MCF 10A (cell line): ENCODE measurements at regions of chr12 and their contacts with region 1.

Region 1: GRCh38 chr12:26884765-26885576 is 52.0 kb upstream of the ITPR2 start:
- DNase-seq: peak; percentile 86
- H3K4me3 Mint-ChIP-seq: no peak overlapping the region
- H3K27ac Mint-ChIP-seq: no peak overlapping the region
- H3K4me1 Mint-ChIP-seq: peaks cover 8% of the 10 kb centered on the region
- H3K27me3 Mint-ChIP-seq: no peaks in the 10 kb centered on the region
- CTCF ChIP-seq: peak; percentile 82

Region 2: GRCh38 chr12:26845057-26845666 is 39.8 kb before region 1 on chr12:
- CTCF ChIA-PET with region 1: interaction called, 21 read pairs
- POLR2A ChIA-PET with region 1: no interaction called
- intact Hi-C with region 1: no loop called
- DNase-seq: peak; percentile 66
- H3K4me3 Mint-ChIP-seq: no peak overlapping the region
- H3K27ac Mint-ChIP-seq: no peak overlapping the region
- H3K4me1 Mint-ChIP-seq: no peaks in the 10 kb centered on the region
- H3K27me3 Mint-ChIP-seq: no peaks in the 10 kb centered on the region
- CTCF ChIP-seq: peak; percentile 74

Region 3: DNA sequence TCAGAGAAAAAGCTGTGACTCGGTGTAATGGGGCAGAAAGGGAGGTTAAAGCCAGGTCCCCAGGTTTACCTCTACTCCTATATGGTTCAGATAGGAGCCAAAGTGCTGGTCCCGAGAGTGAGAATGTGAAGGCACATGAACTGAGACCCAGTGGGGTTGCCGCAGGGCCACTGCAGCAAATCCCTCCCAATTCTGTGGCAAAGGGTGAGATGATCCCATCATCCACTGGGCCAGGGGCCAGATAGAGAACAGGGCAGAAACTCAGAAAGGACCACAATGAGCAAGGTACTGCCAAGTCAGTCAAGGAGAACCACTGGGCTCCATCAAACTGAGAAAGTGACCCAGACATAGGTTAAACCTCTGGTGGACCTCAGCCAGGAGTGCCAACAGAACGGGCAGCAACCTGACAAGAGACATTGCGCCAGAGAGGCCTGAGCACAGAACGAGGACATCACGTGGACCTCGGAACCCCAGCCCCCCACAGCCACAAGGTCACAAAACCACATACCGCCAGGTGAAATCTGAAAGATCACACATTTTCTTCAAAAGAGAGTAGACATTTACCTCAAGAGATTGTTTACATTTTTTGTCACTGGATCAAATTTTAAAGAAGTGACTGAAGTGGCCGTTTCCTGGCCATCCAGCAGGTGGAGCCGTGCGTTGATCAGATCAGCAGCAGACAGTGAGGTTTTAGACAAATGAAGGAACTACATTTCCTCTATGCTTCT is 31.5 kb before region 1 on chr12:
- CTCF ChIA-PET with region 1: interaction called, 32 read pairs
- POLR2A ChIA-PET with region 1: interaction called, 8 read pairs
- intact Hi-C with region 1: loop called (anchors 1 kb)
- DNase-seq: peak; percentile 64
- H3K4me3 Mint-ChIP-seq: no peak overlapping the region
- H3K27ac Mint-ChIP-seq: no peak overlapping the region
- H3K4me1 Mint-ChIP-seq: peaks cover 9% of the 10 kb centered on the region
- H3K27me3 Mint-ChIP-seq: no peaks in the 10 kb centered on the region
- CTCF ChIP-seq: peak; percentile 76

Region 4: DNA sequence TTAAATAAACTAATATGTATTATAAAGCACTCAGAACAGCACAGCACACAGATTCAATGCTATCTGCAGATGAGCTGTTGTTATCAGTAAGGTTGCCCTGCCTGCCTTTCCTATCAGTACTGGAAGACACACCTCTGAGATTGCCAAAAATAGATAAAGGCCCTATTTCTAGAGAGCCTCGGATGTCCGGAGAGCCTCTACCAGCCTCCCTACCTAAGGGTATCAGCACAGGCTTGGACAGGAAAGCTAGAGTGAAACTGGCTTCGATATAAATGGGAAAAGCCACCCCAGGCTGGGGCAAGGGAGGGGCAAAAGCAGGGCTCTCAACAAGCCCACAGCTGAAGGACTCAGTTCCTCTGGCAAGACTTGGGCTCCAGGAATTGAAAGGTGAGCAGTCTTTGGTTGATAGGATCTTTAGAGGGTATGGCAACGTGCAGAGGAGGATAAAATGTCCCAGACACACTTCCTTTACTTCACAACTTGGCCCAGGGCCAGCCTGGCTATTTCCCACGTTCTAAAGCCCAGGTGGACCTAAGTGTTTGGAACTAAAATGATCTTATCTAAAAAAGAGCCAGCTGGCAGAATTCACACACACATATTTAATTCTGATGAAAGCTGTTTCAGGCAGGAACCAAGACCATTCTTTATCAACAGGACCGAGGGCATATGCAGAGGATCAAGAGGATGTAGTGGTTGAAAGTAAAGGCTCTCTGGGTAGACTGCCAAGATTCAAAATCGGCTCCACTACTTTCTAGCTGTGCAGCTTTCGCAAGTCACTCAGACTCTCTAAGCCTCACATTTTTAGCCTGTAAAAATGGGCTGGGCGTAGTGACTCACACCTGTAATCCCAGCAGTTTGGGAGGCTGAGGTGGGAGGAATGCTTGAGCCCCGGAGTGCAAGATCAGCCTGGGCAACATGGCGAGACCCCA is 14.2 kb before region 1 on chr12:
- CTCF ChIA-PET with region 1: interaction called, 44 read pairs
- POLR2A ChIA-PET with region 1: interaction called, 4 read pairs
- intact Hi-C with region 1: no loop called
- DNase-seq: peak; percentile 93
- H3K4me3 Mint-ChIP-seq: peak overlapping the region; percentile 53
- H3K27ac Mint-ChIP-seq: peak overlapping the region; percentile 36
- H3K4me1 Mint-ChIP-seq: peaks cover 16% of the 10 kb centered on the region
- H3K27me3 Mint-ChIP-seq: no peaks in the 10 kb centered on the region
- CTCF ChIP-seq: no peak

Region 5: DNA sequence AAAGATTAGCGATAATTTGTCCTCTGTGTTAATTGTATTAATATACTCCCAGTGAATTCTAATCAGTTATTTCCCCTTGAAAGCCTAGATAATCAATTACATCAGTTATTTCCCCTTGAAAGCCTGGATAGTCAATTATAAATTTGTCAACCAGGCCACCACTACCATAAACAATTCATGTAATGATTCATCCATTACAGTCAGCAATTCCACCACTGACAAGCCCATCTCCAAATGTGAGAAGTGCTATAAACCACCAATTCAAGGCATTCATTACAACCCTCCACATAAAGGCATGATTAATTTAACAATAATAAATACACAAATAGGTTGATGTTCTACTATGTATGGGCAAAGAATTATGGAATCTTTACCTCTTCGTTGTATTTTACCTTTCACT is 11.9 kb after region 1 on chr12:
- CTCF ChIA-PET with region 1: interaction called, 39 read pairs
- POLR2A ChIA-PET with region 1: no interaction called
- intact Hi-C with region 1: no loop called
- DNase-seq: no peak
- H3K4me3 Mint-ChIP-seq: no peak overlapping the region
- H3K27ac Mint-ChIP-seq: no peak overlapping the region
- H3K4me1 Mint-ChIP-seq: no peaks in the 10 kb centered on the region
- H3K27me3 Mint-ChIP-seq: no peaks in the 10 kb centered on the region
- CTCF ChIP-seq: no peak

Region 6: GRCh38 chr12:26906704-26907103 is 21.7 kb after region 1 on chr12:
- CTCF ChIA-PET with region 1: interaction called, 39 read pairs
- POLR2A ChIA-PET with region 1: no interaction called
- intact Hi-C with region 1: no loop called
- DNase-seq: no peak
- H3K4me3 Mint-ChIP-seq: no peak overlapping the region
- H3K27ac Mint-ChIP-seq: no peak overlapping the region
- H3K4me1 Mint-ChIP-seq: no peaks in the 10 kb centered on the region
- H3K27me3 Mint-ChIP-seq: no peaks in the 10 kb centered on the region
- CTCF ChIP-seq: no peak

Region 7: GRCh38 chr12:27333302-27334009 is 448.5 kb after region 1 on chr12:
- CTCF ChIA-PET with region 1: no interaction called
- POLR2A ChIA-PET with region 1: no interaction called
- intact Hi-C with region 1: no loop called
- DNase-seq: peak; percentile 51
- H3K4me3 Mint-ChIP-seq: peak overlapping the region; percentile 86
- H3K27ac Mint-ChIP-seq: peak overlapping the region; percentile 82
- H3K4me1 Mint-ChIP-seq: peaks cover 53% of the 10 kb centered on the region
- H3K27me3 Mint-ChIP-seq: no peaks in the 10 kb centered on the region
- CTCF ChIP-seq: no peak